ENCODE measurements at regions of chr1 and their contacts with region 1.

Region 1: GRCh38 chr1:6180212-6180575 is at the start of gene CHD5:
- DNase-seq: no peak
- H3K4me3 ChIP-seq: peak within 1 kb of the TSS; percentile 10 to 30
- H3K27ac ChIP-seq: no peak within 1 kb of the TSS
- H3K4me1 ChIP-seq: peaks cover 7% of the 10 kb centered on the region
- H3K27me3 ChIP-seq: peaks cover 15% of the 10 kb centered on the region
- CTCF ChIP-seq: no peak
- POLR2A ChIP-seq: no peak
- total RNA-seq, gene CHD5: 4.9 to 17.0 TPM

Region 2: GRCh38 chr1:5992026-5992813 is 188.0 kb before region 1 on chr1 and contains the start of gene NPHP4:
- intact Hi-C with region 1: loop called (anchors 5 kb)
- DNase-seq: peak; percentile 100
- H3K4me3 ChIP-seq: peak within 1 kb of the TSS; percentile 65 to 70
- H3K27ac ChIP-seq: peak within 1 kb of the TSS; percentile 75 to 84
- H3K4me1 ChIP-seq: peaks cover 8% of the 10 kb centered on the region
- H3K27me3 ChIP-seq: no peaks in the 10 kb centered on the region
- CTCF ChIP-seq: peak in 1 of 4 experiments; percentile 12
- POLR2A ChIP-seq: peak; percentile 40
- total RNA-seq, gene NPHP4: 11.4 to 32.2 TPM

Region 3: GRCh38 chr1:6208723-6209660 is 28.8 kb after region 1 on chr1:
- intact Hi-C with region 1: no loop called
- DNase-seq: no peak
- H3K4me3 ChIP-seq: no peak overlapping the region
- H3K27ac ChIP-seq: no peak overlapping the region
- H3K4me1 ChIP-seq: no peaks in the 10 kb centered on the region
- H3K27me3 ChIP-seq: no peaks in the 10 kb centered on the region
- CTCF ChIP-seq: peak in 2 of 4 experiments; percentile 16 to 20
- POLR2A ChIP-seq: no peak

Region 4: DNA sequence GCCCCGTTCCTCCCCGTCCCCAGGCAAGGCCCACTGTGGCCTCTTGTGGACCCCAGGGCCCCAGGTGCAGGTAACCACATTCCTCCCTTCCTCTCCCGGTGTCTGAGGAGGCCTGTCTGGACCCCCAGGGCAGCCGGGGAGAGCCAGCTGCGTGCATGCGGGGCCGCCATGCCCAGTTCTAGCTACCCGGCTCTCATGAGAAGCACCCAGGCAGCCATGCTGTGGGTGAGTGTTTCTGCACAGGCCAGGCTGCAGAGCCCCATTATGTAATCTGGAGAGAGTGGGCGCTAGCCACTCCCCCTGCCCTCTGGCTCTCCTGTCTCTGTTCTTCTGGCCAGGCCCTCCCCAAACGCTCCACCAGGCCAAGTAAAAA is 329.7 kb after region 1 on chr1:
- intact Hi-C with region 1: no loop called
- DNase-seq: no peak
- H3K4me3 ChIP-seq: no peak overlapping the region
- H3K27ac ChIP-seq: no peak overlapping the region
- H3K4me1 ChIP-seq: no peaks in the 10 kb centered on the region
- H3K27me3 ChIP-seq: no peaks in the 10 kb centered on the region
- CTCF ChIP-seq: no peak
- POLR2A ChIP-seq: no peak

Region 5: DNA sequence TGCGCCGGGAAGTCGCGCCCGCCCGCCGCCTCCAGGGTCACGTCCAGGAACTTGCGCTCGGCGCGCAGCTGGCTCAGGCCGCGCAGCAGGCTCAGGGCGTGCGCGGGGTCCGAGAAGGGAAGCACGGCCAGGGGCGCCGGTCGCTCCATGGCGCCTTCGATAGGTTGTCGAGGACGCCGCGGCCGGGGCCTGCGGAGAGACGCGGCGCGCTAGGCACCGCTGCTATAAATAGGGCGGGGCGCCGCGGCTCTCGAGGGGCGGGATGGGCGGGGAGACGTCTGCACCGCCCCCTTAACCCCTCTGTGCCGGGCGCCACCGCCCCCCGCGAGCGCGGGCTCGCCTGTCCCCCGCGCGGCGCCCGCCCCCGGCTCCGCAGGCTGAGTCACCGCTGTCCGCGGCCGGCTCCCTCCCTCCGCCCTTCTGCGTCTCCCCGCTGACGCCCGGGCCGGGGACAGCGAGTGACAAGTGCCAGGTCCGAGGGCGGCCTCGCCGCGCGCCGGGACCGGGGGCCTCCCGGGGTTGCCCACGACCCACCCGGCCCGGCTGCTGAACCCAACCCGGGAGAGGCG is 422.6 kb after region 1 on chr1 and contains the start of gene KLHL21:
- intact Hi-C with region 1: no loop called
- DNase-seq: peak; percentile 87
- H3K4me3 ChIP-seq: peak within 1 kb of the TSS; percentile 80 to 86
- H3K27ac ChIP-seq: peak within 1 kb of the TSS; percentile 97 to 99
- H3K4me1 ChIP-seq: peaks cover 21% of the 10 kb centered on the region
- H3K27me3 ChIP-seq: no peaks in the 10 kb centered on the region
- CTCF ChIP-seq: peak in 1 of 4 experiments; percentile 1
- POLR2A ChIP-seq: peak; percentile 85
- total RNA-seq, gene KLHL21: 67.1 to 111 TPM

Measured in prostate gland (tissue), 2 donors.